Mammary epithelial cell (primary cell): ENCODE measurements at regions of chr4 and their contacts with region 1.

Region 1: DNA sequence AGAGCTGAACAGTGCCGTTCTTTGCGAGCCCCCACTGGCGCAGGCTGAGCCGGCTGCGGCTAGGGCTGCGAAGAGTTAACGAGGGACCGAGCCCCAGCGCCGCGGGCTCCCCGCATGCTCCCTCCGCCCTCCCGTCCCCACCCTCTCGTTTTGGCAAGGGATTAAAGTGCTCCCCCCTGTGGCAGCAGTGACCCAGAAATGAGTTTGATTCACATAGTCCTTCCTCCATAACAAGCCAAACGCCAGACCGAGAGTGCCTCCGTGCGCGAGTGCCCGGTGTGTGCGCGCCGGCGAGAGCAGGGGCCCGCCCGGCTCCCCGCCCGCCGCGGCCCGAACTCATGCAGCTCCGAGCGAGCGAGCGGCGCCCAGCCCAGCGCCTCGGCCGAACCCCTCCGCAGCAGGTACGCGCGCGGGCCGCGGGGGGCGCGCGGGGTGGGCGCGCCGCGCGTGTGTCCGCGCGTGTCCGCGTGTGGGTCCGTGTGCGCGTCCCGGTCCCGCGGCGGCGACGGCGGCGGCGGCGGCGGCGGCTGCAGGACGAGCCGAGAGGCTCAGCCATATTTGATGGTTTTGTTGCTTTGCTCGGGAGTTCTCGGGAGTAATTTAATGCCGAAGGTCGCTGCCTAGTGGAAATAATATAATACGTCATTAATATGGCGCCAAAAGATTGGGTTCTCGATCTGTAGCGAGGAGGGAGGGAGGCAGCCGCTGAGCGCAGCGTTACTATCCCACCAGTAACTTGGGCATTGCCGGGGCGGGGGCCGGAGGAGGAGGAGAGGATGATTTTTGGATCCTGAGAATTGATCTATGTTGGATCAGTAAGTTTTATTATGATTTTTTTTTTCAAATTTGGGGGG is at the start of gene JADE1:
- DNase-seq: peak; percentile 91
- H3K4me3 ChIP-seq: peak within 1 kb of the TSS; percentile 86 to 100 (median 88)
- H3K27ac ChIP-seq: peak within 1 kb of the TSS; percentile 71
- H3K4me1 ChIP-seq: peaks cover 6% of the 10 kb centered on the region
- H3K27me3 ChIP-seq: no peaks in the 10 kb centered on the region
- CTCF ChIP-seq: peak; percentile 33 to 81
- total RNA-seq, gene JADE1: 5.0 to 6.0 TPM

Region 2: DNA sequence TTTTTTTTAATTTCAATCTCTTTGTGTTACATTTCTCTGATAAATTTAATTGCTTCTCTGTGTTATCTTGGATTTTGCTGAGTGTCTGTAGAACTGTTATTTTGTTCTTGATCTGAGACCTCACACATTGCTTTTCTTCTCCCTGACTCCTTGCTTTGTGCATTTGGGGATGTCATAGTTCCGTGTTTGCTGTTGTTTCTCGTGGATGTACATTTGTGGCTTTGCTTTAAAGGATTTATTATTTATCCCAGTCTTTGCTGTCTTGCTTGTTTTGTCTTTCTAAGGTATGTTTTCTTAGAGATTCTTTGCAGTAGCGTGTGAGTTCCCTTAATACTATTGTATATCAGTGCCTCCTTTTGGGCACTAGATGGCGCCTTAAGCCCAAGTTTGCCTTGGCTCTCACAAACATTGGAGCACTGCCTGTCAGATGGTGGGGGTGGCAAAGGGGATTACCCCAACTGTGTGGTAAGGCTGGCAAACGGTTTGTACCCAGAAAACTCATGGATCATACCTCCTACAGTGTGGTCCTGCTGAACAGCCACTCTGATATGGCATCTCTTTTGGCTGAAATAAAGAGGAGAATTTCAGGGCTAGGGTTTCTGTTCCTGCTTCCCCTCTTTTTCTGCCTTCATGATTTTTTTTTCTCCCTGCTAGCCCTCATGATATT is 618.5 kb before region 1 on chr4:
- CTCF ChIA-PET with region 1: no interaction called
- dilution Hi-C with region 1: no loop called
- in situ Hi-C with region 1: loop called (anchors 25 kb)
- intact Hi-C with region 1: loop called (anchors 1 kb)
- DNase-seq: peak; percentile 55
- H3K4me3 ChIP-seq: no peak overlapping the region
- H3K27ac ChIP-seq: no peak overlapping the region
- H3K4me1 ChIP-seq: no peaks in the 10 kb centered on the region
- H3K27me3 ChIP-seq: no peaks in the 10 kb centered on the region
- CTCF ChIP-seq: peak; percentile 86 to 91

Region 3: DNA sequence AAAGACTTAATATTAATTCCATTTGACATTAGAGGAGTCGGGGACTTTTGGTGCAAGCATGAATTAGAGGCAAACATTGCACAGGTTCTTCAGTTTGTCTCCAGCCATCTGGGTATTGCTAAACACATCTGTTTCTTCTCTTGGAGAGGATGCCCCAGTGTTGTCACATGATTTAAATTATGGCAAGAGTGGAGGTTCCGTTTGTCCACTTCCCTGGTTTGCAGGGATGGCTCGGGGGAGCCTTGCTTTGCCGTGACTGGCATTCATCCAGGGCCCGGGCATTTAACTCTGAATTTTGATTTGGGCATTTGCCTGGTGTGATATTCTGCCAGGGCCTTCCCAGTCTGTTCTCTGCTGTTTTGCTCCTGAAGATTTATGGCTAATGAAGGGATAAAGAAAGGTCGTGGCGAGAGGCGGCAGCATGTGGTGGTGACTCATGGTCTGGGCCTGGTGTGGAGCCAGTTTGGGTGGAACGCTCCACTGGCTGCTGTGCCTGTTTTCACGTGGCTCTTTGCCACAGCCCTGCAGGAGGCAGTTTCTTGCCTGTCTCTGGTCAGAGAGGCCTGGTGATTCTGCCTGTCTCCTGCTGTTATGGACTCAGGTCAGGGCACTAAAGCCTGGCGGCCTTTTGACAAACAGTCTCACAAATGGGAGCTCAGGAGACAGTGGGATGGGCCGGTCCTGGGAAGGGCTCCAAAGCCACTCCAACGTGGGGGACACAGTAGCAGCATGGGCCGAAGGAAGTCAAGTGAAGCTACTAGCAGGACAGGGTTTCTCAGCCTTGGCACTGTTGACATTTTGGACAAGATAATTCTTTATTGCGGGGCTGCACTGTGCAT is 422.7 kb before region 1 on chr4:
- CTCF ChIA-PET with region 1: no interaction called
- dilution Hi-C with region 1: no loop called
- in situ Hi-C with region 1: no loop called
- intact Hi-C with region 1: loop called (anchors 2 kb)
- DNase-seq: peak; percentile 83
- H3K4me3 ChIP-seq: no peak overlapping the region
- H3K27ac ChIP-seq: peak overlapping the region; percentile 51
- H3K4me1 ChIP-seq: peaks cover 37% of the 10 kb centered on the region
- H3K27me3 ChIP-seq: no peaks in the 10 kb centered on the region
- CTCF ChIP-seq: no peak

Region 4: GRCh38 chr4:128454281-128455075 is 355.2 kb before region 1 on chr4:
- CTCF ChIA-PET with region 1: interaction called, 5 read pairs
- dilution Hi-C with region 1: no loop called
- in situ Hi-C with region 1: loop called in 1 of 2 experiments (anchors 25 kb)
- intact Hi-C with region 1: loop called (anchors 1 kb)
- DNase-seq: peak; percentile 83
- H3K4me3 ChIP-seq: no peak overlapping the region
- H3K27ac ChIP-seq: no peak overlapping the region
- H3K4me1 ChIP-seq: peaks cover 14% of the 10 kb centered on the region
- H3K27me3 ChIP-seq: no peaks in the 10 kb centered on the region
- CTCF ChIP-seq: peak; percentile 88 to 93

Region 5: DNA sequence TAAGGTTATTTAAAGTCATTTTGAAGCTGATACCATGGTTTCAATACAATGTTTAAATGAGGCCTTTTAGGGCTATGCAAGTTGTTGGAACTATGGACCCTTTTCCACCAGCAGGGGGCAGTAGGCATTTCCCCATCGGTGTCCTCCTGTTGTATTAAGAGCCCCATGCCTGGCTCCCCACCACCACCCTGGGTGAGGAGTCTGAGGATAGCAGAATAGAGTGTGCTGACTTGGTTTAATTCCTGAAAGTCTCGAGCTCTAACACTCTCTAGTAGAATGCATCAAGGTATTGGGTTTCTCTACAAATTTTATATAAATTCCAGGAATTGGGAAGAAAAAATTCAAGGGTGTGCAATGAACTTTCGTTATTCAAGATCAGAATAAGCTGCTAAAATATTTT is 235.0 kb before region 1 on chr4:
- CTCF ChIA-PET with region 1: interaction called, 3 read pairs
- dilution Hi-C with region 1: no loop called
- in situ Hi-C with region 1: loop called (anchors 5 to 10 kb)
- intact Hi-C with region 1: loop called (anchors 1 kb)
- DNase-seq: peak; percentile 47
- H3K4me3 ChIP-seq: no peak overlapping the region
- H3K27ac ChIP-seq: no peak overlapping the region
- H3K4me1 ChIP-seq: peaks cover 30% of the 10 kb centered on the region
- H3K27me3 ChIP-seq: no peaks in the 10 kb centered on the region
- CTCF ChIP-seq: peak; percentile 64 to 79

Region 6: DNA sequence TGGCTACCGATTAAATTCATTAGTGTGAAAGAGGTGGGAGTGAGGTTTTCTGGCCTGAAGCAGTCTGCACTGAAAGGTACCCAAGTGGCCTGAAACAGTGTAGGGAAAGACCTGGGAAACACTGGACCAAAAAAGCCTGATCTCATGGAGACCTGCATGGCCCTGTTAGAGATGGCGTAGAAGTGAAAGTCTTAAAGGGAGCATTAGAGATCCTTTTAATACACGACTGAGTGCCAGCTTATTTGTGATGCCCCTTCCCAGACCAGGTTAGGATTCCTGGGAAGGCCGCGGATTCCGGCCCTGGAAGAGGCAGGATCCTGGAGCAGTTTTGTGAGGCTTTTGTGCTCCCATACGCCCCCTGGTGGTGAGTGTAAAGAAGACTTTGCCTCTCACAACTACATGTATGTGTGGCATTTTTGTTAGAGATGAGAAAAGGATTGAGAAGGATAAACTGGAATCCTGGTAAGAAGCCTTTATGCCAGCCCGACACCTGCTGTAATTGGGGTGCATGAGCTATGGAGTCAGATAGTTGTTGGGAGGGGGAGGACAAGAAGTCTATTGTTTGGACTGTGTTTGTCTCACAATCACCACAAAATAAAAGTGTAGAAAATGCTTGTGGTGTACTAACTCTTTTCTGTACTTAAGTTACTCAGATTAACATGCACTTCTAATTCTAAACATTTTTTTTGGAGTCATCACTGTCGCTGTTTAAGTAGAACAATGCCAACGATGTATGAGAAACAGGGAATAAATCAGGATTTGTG is 53.8 kb after region 1 on chr4:
- CTCF ChIA-PET with region 1: no interaction called
- dilution Hi-C with region 1: no loop called
- in situ Hi-C with region 1: no loop called
- intact Hi-C with region 1: loop called (anchors 1 kb)
- DNase-seq: peak; percentile 50
- H3K4me3 ChIP-seq: no peak overlapping the region
- H3K27ac ChIP-seq: no peak overlapping the region
- H3K4me1 ChIP-seq: peaks cover 4% of the 10 kb centered on the region
- H3K27me3 ChIP-seq: no peaks in the 10 kb centered on the region
- CTCF ChIP-seq: peak; percentile 75 to 84